CD8-positive, alpha-beta T cell (primary cell): ENCODE measurements at regions of chr15 and their contacts with region 1.

Region 1: GRCh38 chr15:31435261-31435911 is 108.8 kb downstream of the KLF13 start:
- DNase-seq: peak; percentile 62 to 96 (median 84)
- ATAC-seq: peak; percentile 70
- H3K4me3 ChIP-seq: peak overlapping the region; percentile 43 to 46
- H3K4me3 Mint-ChIP-seq: peak overlapping the region; percentile 80
- H3K27ac ChIP-seq: peak overlapping the region; percentile 89 to 95
- H3K27ac Mint-ChIP-seq: peak overlapping the region; percentile 98
- H3K4me1 ChIP-seq: peaks cover 66% of the 10 kb centered on the region
- H3K4me1 Mint-ChIP-seq: peaks cover 83% of the 10 kb centered on the region
- H3K27me3 ChIP-seq: no peaks in the 10 kb centered on the region
- H3K27me3 Mint-ChIP-seq: no peaks in the 10 kb centered on the region
- CTCF ChIP-seq: peak; percentile 33

Region 2: DNA sequence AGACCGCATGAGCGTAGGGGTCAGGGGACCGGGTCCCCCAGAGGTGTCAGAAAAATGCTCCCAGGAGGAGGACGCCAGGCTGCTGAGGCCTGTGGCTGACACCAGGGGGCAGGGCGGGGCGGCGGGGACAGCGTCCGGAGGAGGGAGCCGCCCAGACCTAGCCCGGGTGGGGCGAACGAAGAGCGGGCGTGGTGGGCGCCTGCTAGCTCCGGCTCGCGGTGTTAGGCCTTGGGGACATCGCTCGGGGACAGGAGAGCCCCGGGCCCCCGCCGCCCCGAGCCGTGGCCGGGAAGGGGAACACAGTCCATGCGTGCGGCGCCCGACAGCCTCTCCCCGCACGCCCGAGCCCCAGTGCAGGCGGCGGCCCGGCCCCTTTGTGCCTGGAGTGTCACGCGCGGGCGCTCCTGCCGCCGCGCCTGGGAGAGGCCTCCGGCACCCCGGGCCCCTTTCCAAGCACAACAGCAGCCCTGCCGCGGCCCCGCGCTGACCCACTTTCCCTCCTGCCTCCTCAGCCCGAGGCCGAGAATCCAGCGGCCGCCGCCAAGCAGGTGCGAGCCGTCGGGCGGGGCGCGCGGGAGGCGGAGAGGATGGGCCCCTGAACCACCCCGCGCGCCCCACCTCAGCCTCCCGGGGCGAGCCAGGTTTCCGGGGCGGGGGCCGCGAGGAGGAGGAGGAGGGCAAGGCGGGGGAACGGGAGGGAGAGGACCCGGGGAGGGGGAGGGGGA is 219.7 kb before region 1 on chr15:
- CTCF ChIA-PET with region 1: interaction called, 6 read pairs
- POLR2A ChIA-PET with region 1: interaction called, 8 read pairs
- intact Hi-C with region 1: loop called (anchors 1 to 2 kb)
- DNase-seq: peak; percentile 56 to 91 (median 84)
- ATAC-seq: peak; percentile 76
- H3K4me3 ChIP-seq: peak overlapping the region; percentile 32 to 55
- H3K4me3 Mint-ChIP-seq: peak overlapping the region; percentile 56
- H3K27ac ChIP-seq: peak overlapping the region; percentile 56 to 75
- H3K27ac Mint-ChIP-seq: peak overlapping the region; percentile 83
- H3K4me1 ChIP-seq: peaks cover 21% of the 10 kb centered on the region
- H3K4me1 Mint-ChIP-seq: peaks cover 30% of the 10 kb centered on the region
- H3K27me3 ChIP-seq: no peaks in the 10 kb centered on the region
- H3K27me3 Mint-ChIP-seq: no peaks in the 10 kb centered on the region
- CTCF ChIP-seq: peak; percentile 73

Region 3: GRCh38 chr15:31344823-31345605 is 90.4 kb before region 1 on chr15:
- CTCF ChIA-PET with region 1: interaction called, 16 read pairs
- POLR2A ChIA-PET with region 1: interaction called, 18 read pairs
- intact Hi-C with region 1: loop called (anchors 1 to 5 kb)
- DNase-seq: peak in 1 of 9 experiments; percentile 68
- ATAC-seq: no peak
- H3K4me3 ChIP-seq: peak overlapping the region; percentile 55 to 72
- H3K4me3 Mint-ChIP-seq: peak overlapping the region; percentile 91
- H3K27ac ChIP-seq: peak overlapping the region; percentile 70 to 78
- H3K27ac Mint-ChIP-seq: peak overlapping the region; percentile 97
- H3K4me1 ChIP-seq: peaks cover 99% of the 10 kb centered on the region
- H3K4me1 Mint-ChIP-seq: peaks cover 98% of the 10 kb centered on the region
- H3K27me3 ChIP-seq: no peaks in the 10 kb centered on the region
- H3K27me3 Mint-ChIP-seq: no peaks in the 10 kb centered on the region
- CTCF ChIP-seq: no peak

Region 4: GRCh38 chr15:31396881-31397560 is 38.4 kb before region 1 on chr15:
- CTCF ChIA-PET with region 1: interaction called, 15 read pairs
- POLR2A ChIA-PET with region 1: interaction called, 47 read pairs
- intact Hi-C with region 1: loop called (anchors 1 kb)
- DNase-seq: peak in 1 of 9 experiments; percentile 42
- ATAC-seq: no peak
- H3K4me3 ChIP-seq: no peak overlapping the region
- H3K4me3 Mint-ChIP-seq: no peak overlapping the region
- H3K27ac ChIP-seq: no peak overlapping the region
- H3K27ac Mint-ChIP-seq: no peak overlapping the region
- H3K4me1 ChIP-seq: peaks cover 39% of the 10 kb centered on the region
- H3K4me1 Mint-ChIP-seq: peaks cover 48% of the 10 kb centered on the region
- H3K27me3 ChIP-seq: no peaks in the 10 kb centered on the region
- H3K27me3 Mint-ChIP-seq: no peaks in the 10 kb centered on the region
- CTCF ChIP-seq: no peak

Region 5: GRCh38 chr15:31472636-31473384 is 37.4 kb after region 1 on chr15:
- CTCF ChIA-PET with region 1: interaction called, 19 read pairs
- POLR2A ChIA-PET with region 1: interaction called, 18 read pairs
- intact Hi-C with region 1: loop called in 1 of 2 experiments (anchors 2 kb)
- DNase-seq: peak in 8 of 9 experiments; percentile 26 to 82 (median 57)
- ATAC-seq: peak; percentile 84
- H3K4me3 ChIP-seq: peak overlapping the region; percentile 24 to 28
- H3K4me3 Mint-ChIP-seq: peak overlapping the region; percentile 79
- H3K27ac ChIP-seq: peak overlapping the region; percentile 52 to 78
- H3K27ac Mint-ChIP-seq: peak overlapping the region; percentile 96
- H3K4me1 ChIP-seq: peaks cover 39% of the 10 kb centered on the region
- H3K4me1 Mint-ChIP-seq: peaks cover 59% of the 10 kb centered on the region
- H3K27me3 ChIP-seq: no peaks in the 10 kb centered on the region
- H3K27me3 Mint-ChIP-seq: no peaks in the 10 kb centered on the region
- CTCF ChIP-seq: no peak